ENCODE measurements at regions of chr10 and their contacts with region 1.

Region 1: DNA sequence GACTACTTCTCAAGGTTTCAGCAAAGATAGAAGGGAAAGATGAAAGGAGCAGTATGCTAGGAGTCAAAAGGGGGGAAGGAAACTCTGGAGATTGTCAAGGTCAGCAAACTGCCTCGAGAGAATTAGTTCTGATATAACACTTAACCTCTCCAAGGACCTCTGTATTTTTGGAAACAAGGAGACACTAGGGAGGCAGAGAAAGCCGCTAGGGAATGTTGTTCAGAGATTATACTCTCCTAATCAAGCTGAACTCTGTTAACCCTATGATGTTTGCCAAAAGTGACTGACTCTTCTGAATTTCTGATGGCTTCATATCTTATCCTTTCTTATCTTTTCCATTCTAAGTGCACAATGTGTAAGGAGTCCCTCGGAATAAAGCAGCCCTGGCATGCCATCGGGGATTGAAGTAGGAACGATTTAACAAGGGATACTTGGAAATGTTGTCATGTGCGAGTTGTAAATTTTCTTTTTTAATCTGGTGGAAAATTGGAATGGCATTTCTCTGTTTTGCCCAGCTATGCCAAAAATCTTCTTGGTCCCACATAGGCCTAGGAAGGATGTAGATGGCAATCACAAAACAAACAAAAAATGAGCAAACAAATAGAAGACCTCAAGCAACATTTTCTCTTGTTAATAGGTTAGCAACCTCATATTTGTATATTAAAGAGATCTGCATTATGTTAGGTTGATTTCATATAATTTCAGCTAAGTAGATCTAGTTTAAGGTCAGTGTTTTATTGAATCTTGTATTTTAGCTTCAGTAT is 27.3 kb downstream of the CREM start:
- DNase-seq: no peak
- ATAC-seq: no peak
- H3K4me3 ChIP-seq: no peak overlapping the region
- H3K4me3 Mint-ChIP-seq: no peak overlapping the region
- H3K27ac ChIP-seq: no peak overlapping the region
- H3K27ac Mint-ChIP-seq: no peak overlapping the region
- H3K4me1 ChIP-seq: peaks cover 20 to 22% of the 10 kb centered on the region in 2 donors
- H3K4me1 Mint-ChIP-seq: peaks cover 26% of the 10 kb centered on the region
- H3K27me3 ChIP-seq: no peaks in the 10 kb centered on the region
- H3K27me3 Mint-ChIP-seq: no peaks in the 10 kb centered on the region
- CTCF ChIP-seq: no peak

Region 2: GRCh38 chr10:35040760-35041501 is 113.0 kb before region 1 on chr10:
- CTCF ChIA-PET with region 1: no interaction called
- POLR2A ChIA-PET with region 1: interaction called, 12 read pairs
- intact Hi-C with region 1: no loop called
- DNase-seq: no peak
- ATAC-seq: no peak
- H3K4me3 ChIP-seq: no peak overlapping the region
- H3K4me3 Mint-ChIP-seq: no peak overlapping the region
- H3K27ac ChIP-seq: no peak overlapping the region
- H3K27ac Mint-ChIP-seq: no peak overlapping the region
- H3K4me1 ChIP-seq: no peaks in the 10 kb centered on the region
- H3K4me1 Mint-ChIP-seq: no peaks in the 10 kb centered on the region
- H3K27me3 ChIP-seq: no peaks in the 10 kb centered on the region
- H3K27me3 Mint-ChIP-seq: no peaks in the 10 kb centered on the region
- CTCF ChIP-seq: no peak

Region 3: GRCh38 chr10:35136263-35136815 is 17.6 kb before region 1 on chr10:
- CTCF ChIA-PET with region 1: interaction called, 12 read pairs
- POLR2A ChIA-PET with region 1: interaction called, 6 read pairs
- intact Hi-C with region 1: loop called (anchors 1 kb)
- DNase-seq: peak; percentile 89
- ATAC-seq: peak; percentile 85
- H3K4me3 ChIP-seq: peak overlapping the region in 1 of 5 experiments; percentile 42
- H3K4me3 Mint-ChIP-seq: peak overlapping the region; percentile 73
- H3K27ac ChIP-seq: peak overlapping the region; percentile 23 to 28
- H3K27ac Mint-ChIP-seq: peak overlapping the region; percentile 91
- H3K4me1 ChIP-seq: peaks cover 24 to 27% of the 10 kb centered on the region in 2 donors
- H3K4me1 Mint-ChIP-seq: peaks cover 39% of the 10 kb centered on the region
- H3K27me3 ChIP-seq: no peaks in the 10 kb centered on the region
- H3K27me3 Mint-ChIP-seq: no peaks in the 10 kb centered on the region
- CTCF ChIP-seq: no peak

Measured in B cell (primary cell).